ENCODE measurements at regions of chr9 and their contacts with region 1.

Region 1: DNA sequence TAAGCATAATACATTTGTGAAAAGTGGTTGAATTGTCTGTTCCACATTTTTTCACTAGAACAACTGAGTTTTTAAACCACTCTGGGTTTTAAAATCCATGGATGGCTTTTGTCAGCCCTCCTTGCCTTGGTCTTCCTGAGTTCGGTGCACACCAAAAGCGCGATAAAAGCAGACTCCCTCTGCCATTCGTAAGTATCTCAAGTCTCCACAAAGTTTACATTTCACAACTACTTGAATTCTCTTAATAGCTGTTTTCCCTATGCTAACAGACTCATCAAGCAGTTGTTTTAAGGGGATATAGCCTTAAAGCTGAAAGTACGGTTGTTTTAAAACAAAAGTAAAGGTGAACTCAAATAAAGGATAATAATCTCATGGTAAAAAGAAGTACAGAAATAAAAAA is 52.9 kb downstream of the GLIS3 start:
- DNase-seq: no peak
- H3K4me3 ChIP-seq: no peak overlapping the region
- H3K27ac ChIP-seq: no peak overlapping the region
- H3K4me1 ChIP-seq: no peaks in the 10 kb centered on the region
- H3K27me3 ChIP-seq: no peaks in the 10 kb centered on the region
- CTCF ChIP-seq: no peak

Region 2: GRCh38 chr9:3541206-3541605 is 705.8 kb before region 1 on chr9:
- CTCF ChIA-PET with region 1: no interaction called
- POLR2A ChIA-PET with region 1: no interaction called
- intact Hi-C with region 1: loop called (anchors 5 kb)
- DNase-seq: no peak
- H3K4me3 ChIP-seq: no peak overlapping the region
- H3K27ac ChIP-seq: no peak overlapping the region
- H3K4me1 ChIP-seq: no peaks in the 10 kb centered on the region
- H3K27me3 ChIP-seq: no peaks in the 10 kb centered on the region
- CTCF ChIP-seq: no peak

Measured in PC-9 (cell line).